Activated CD8-positive, alpha-beta memory T cell treated with anti-CD3 and anti-CD28 coated beads, Interleukin-2, amount 10 ng/mL, durations not matched to agents 7 days and 5 days (primary cell): ENCODE measurements at regions of chr17 and their contacts with region 1.

Region 1: GRCh38 chr17:61002316-61002736 is 324.7 kb downstream of the BCAS3 start:
- DNase-seq: no peak
- ATAC-seq: peak; percentile 47
- H3K4me3 Mint-ChIP-seq: no peak overlapping the region
- H3K27ac Mint-ChIP-seq: no peak overlapping the region
- H3K4me1 Mint-ChIP-seq: peaks cover 6% of the 10 kb centered on the region
- H3K27me3 Mint-ChIP-seq: no peaks in the 10 kb centered on the region

Region 2: GRCh38 chr17:60695960-60696359 is 306.4 kb before region 1 on chr17:
- CTCF ChIA-PET with region 1: no interaction called
- DNase-seq: no peak
- ATAC-seq: no peak
- H3K4me3 Mint-ChIP-seq: no peak overlapping the region
- H3K27ac Mint-ChIP-seq: no peak overlapping the region
- H3K4me1 Mint-ChIP-seq: peaks cover 5% of the 10 kb centered on the region
- H3K27me3 Mint-ChIP-seq: no peaks in the 10 kb centered on the region

Region 3: GRCh38 chr17:61361084-61361483 is 358.8 kb after region 1 on chr17:
- CTCF ChIA-PET with region 1: interaction called, 10 read pairs
- DNase-seq: no peak
- ATAC-seq: no peak
- H3K4me3 Mint-ChIP-seq: no peak overlapping the region
- H3K27ac Mint-ChIP-seq: no peak overlapping the region
- H3K4me1 Mint-ChIP-seq: no peaks in the 10 kb centered on the region
- H3K27me3 Mint-ChIP-seq: no peaks in the 10 kb centered on the region